Activated CD4-positive, alpha-beta memory T cell treated with anti-CD3 and anti-CD28 coated beads, Interleukin-2, amount 10 ng/mL, durations not matched to agents 7 days and 5 days (primary cell): ENCODE measurements at regions of chr4 and their contacts with region 1.

Region 1: GRCh38 chr4:2241410-2242353 is at the starts of genes HAUS3 and POLN:
- DNase-seq: peak; percentile 100
- H3K4me3 Mint-ChIP-seq: peak within 1 kb of the TSS; percentile 95
- H3K27ac Mint-ChIP-seq: peak within 1 kb of the TSS; percentile 92
- H3K4me1 Mint-ChIP-seq: peaks cover 59% of the 10 kb centered on the region
- H3K27me3 Mint-ChIP-seq: no peaks in the 10 kb centered on the region
- total RNA-seq, gene HAUS3: 27.1 to 27.4 TPM
- total RNA-seq, gene POLN: 3.3 to 4.0 TPM

Region 2: GRCh38 chr4:2008875-2009703 is 232.6 kb before region 1 on chr4 and contains the start of gene NELFA:
- CTCF ChIA-PET with region 1: no interaction called
- POLR2A ChIA-PET with region 1: interaction called, 12 read pairs
- DNase-seq: peak; percentile 94
- H3K4me3 Mint-ChIP-seq: peak within 1 kb of the TSS; percentile 89
- H3K27ac Mint-ChIP-seq: peak within 1 kb of the TSS; percentile 80
- H3K4me1 Mint-ChIP-seq: peaks cover 34% of the 10 kb centered on the region
- H3K27me3 Mint-ChIP-seq: peaks cover 6% of the 10 kb centered on the region
- total RNA-seq, gene NELFA: 34.2 to 36.0 TPM

Region 3: GRCh38 chr4:2262143-2262943 is 20.7 kb after region 1 on chr4:
- CTCF ChIA-PET with region 1: interaction called, 10 read pairs
- POLR2A ChIA-PET with region 1: interaction called, 25 read pairs
- DNase-seq: peak; percentile 99
- H3K4me3 Mint-ChIP-seq: peak overlapping the region; percentile 73
- H3K27ac Mint-ChIP-seq: peak overlapping the region; percentile 68
- H3K4me1 Mint-ChIP-seq: peaks cover 4% of the 10 kb centered on the region
- H3K27me3 Mint-ChIP-seq: no peaks in the 10 kb centered on the region

Region 4: DNA sequence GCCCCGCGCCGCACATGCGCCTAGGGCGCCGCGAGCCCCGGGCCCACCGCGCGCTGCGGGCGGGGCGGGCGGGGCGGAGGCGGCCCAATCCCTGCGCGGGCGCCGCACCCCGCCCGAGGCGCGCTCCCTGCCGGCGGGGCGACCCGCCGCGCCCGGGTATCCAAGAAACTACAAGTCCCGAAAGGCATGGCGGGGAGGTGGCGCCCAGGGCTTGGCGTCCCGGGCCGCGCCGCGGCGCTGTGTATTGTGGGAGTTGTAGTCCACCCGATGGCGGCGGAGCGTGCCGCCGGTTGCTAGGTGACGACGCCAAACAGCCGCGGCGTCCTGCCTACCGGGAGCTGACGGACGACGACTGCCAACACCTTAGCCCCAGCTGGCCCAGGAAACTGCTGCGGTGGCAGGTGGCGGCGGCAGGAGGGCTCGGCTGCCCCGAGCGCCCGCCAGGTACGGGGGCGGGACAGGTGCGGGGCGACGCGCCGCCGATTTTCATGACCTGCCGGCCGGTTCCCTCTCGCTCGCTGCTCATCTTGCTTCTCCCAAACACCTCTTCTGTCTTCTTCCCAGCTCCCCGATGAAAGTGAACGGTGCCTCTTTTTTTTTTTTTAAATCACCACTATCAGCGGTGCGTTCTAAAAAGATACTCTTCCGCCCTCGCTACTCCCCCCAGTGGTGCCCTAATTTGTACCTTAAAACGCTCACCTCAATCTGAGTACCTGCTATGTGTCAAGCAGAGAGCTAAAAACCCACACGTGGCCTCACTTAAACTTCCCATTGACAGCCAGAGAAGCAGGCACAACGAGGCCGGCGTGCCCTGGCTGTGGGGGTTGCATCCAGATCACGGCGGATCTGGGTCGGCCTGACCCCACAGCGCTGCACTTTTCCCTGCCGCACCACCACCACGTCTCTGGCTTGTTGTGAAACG is 177.2 kb after region 1 on chr4 and contains the start of gene CFAP99:
- CTCF ChIA-PET with region 1: interaction called, 6 read pairs
- POLR2A ChIA-PET with region 1: interaction called, 60 read pairs
- DNase-seq: peak; percentile 99
- H3K4me3 Mint-ChIP-seq: peak within 1 kb of the TSS; percentile 92
- H3K27ac Mint-ChIP-seq: peak within 1 kb of the TSS; percentile 75
- H3K4me1 Mint-ChIP-seq: peaks cover 40% of the 10 kb centered on the region
- H3K27me3 Mint-ChIP-seq: peaks cover 32% of the 10 kb centered on the region
- total RNA-seq, gene CFAP99: 0.08 TPM

Region 5: DNA sequence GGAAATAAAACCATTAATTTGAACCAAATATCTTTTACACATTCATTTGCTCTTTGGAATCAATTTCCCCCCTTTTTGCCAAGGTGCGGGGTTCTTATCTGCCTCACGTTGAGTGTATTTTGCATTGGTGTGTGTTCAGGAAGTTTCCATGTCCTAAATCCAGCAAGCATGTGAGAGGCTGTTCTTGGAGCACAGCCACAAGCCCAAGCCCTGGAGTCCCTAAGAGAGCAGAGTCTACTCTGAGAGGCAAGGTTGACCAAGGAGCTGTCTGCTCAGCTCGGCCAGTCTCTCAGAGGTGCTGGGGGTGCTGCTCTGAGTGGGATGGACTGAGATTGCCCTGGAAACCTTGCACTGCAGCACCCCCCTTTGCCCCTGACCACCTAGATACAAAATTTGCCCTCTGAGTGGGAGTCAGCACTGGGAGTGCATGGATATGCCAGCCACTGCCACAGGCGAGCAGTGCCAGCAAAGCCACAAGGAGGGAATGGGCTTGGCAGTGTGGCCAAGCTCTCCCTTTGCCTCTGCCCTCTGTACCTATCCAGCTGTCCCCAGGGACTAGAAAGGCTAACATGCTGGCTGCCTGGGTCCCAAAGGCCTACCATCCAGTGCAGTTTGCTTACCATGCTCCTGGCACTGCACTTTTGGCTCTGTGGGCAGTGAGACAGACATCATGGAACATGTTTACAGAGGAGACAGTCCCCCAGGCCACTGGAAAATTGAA is 274.3 kb after region 1 on chr4:
- CTCF ChIA-PET with region 1: no interaction called
- POLR2A ChIA-PET with region 1: no interaction called
- DNase-seq: no peak
- H3K4me3 Mint-ChIP-seq: no peak overlapping the region
- H3K27ac Mint-ChIP-seq: no peak overlapping the region
- H3K4me1 Mint-ChIP-seq: peaks cover 8% of the 10 kb centered on the region
- H3K27me3 Mint-ChIP-seq: no peaks in the 10 kb centered on the region

Region 6: GRCh38 chr4:2536193-2537010 is 294.7 kb after region 1 on chr4 and contains the start of gene FAM193A:
- CTCF ChIA-PET with region 1: interaction called, 3 read pairs
- POLR2A ChIA-PET with region 1: interaction called, 11 read pairs
- DNase-seq: peak; percentile 99
- H3K4me3 Mint-ChIP-seq: peak within 1 kb of the TSS; percentile 91
- H3K27ac Mint-ChIP-seq: peak within 1 kb of the TSS; percentile 88
- H3K4me1 Mint-ChIP-seq: peaks cover 19% of the 10 kb centered on the region
- H3K27me3 Mint-ChIP-seq: no peaks in the 10 kb centered on the region
- total RNA-seq, gene FAM193A: 27.4 to 27.9 TPM

Region 7: DNA sequence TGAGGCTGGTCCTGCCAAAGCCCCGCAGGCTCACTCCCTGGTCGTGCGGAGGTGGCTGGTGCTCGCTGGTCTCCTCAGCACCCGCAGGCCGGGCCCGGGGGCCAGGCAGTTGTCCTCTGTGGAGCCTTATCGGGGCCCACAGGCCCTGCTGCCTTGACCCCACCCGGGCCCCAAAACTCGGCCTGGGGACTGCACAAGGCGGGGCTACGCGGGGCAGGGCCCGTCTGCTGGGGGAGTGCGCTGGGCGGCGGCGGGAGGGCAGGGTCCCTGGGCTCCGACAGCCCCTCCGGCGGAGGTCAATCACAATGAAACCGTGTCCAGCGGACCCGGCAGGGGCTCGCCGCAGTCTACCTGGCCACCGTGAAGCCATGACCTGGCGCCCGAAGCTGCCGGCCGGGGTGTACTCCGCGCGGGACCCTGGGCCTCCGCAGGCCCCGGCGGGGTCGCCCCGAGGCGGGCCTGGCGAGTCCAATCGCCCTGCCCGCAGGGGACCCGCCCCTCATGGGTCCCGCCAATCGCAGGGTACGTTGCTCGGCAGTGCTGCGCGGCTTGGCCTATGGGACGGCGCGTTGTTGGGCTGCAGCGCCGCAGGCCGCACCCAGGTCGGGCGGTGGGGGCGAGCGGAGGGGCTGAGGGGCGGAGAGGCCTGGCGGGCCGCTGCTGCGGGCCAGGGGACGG is 601.7 kb after region 1 on chr4 and contains the start of gene ADD1:
- CTCF ChIA-PET with region 1: no interaction called
- POLR2A ChIA-PET with region 1: no interaction called
- DNase-seq: peak; percentile 94
- H3K4me3 Mint-ChIP-seq: peak within 1 kb of the TSS; percentile 84
- H3K27ac Mint-ChIP-seq: peak within 1 kb of the TSS; percentile 85
- H3K4me1 Mint-ChIP-seq: peaks cover 59% of the 10 kb centered on the region
- H3K27me3 Mint-ChIP-seq: no peaks in the 10 kb centered on the region
- total RNA-seq, gene ADD1: 266 to 277 TPM